Activated naive CD4-positive, alpha-beta T cell treated with anti-CD3 and anti-CD28 coated beads for 36 hours (primary cell): ENCODE measurements at regions of chr2 and their contacts with region 1.

Region 1: DNA sequence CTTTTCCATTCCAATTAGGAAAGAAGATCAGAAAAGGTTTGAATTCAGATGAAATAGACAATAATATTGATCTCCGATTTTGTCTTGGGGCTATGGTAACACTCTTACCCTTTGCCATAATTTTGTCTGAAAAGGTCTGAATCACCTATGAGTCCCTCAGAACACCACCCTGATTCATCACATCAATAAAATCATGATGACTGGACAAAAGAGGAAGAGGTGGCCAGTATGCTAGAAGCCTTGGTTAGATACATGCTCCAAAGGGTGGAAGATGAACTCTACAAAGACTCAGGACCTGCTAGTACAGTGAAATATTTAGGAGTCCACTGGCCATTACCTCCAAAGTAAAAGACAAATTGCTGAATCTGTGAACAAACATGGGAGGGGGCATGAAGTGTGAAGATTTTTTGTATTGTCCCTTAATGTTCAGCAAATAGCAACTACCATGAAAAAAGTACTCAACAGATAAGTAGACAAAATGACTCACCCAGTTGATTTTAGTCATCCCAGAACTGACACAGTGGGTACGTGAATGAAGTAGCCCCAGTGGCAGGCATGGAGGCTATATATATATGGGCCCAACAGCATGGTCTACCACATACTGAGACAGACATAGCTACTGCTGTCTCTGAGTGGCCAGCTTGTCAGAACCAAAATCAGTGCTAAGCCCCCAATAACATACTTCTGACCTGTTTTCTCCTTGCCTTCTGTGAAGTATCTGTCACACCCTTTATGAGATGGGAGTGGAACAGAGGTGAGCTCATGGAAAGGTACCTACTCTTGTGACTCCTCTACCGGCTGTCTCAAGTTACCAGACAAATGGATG is 36.5 kb upstream of the GLS start:
- DNase-seq: peak; percentile 76
- H3K4me3 Mint-ChIP-seq: peak overlapping the region; percentile 22
- H3K27ac Mint-ChIP-seq: peak overlapping the region; percentile 85
- H3K4me1 Mint-ChIP-seq: peaks cover 48% of the 10 kb centered on the region
- H3K27me3 Mint-ChIP-seq: no peaks in the 10 kb centered on the region

Region 2: GRCh38 chr2:190408538-190409271 is 435.4 kb before region 1 on chr2:
- CTCF ChIA-PET with region 1: no interaction called
- intact Hi-C with region 1: loop called (anchors 2 kb)
- DNase-seq: peak; percentile 71
- H3K4me3 Mint-ChIP-seq: peak overlapping the region; percentile 84
- H3K27ac Mint-ChIP-seq: peak overlapping the region; percentile 90
- H3K4me1 Mint-ChIP-seq: peaks cover 46% of the 10 kb centered on the region
- H3K27me3 Mint-ChIP-seq: no peaks in the 10 kb centered on the region

Region 3: GRCh38 chr2:190679813-190680591 is 164.1 kb before region 1 on chr2:
- CTCF ChIA-PET with region 1: no interaction called
- intact Hi-C with region 1: loop called (anchors 1 kb)
- DNase-seq: peak; percentile 75
- H3K4me3 Mint-ChIP-seq: peak overlapping the region; percentile 13
- H3K27ac Mint-ChIP-seq: peak overlapping the region; percentile 81
- H3K4me1 Mint-ChIP-seq: peaks cover 52% of the 10 kb centered on the region
- H3K27me3 Mint-ChIP-seq: no peaks in the 10 kb centered on the region

Region 4: DNA sequence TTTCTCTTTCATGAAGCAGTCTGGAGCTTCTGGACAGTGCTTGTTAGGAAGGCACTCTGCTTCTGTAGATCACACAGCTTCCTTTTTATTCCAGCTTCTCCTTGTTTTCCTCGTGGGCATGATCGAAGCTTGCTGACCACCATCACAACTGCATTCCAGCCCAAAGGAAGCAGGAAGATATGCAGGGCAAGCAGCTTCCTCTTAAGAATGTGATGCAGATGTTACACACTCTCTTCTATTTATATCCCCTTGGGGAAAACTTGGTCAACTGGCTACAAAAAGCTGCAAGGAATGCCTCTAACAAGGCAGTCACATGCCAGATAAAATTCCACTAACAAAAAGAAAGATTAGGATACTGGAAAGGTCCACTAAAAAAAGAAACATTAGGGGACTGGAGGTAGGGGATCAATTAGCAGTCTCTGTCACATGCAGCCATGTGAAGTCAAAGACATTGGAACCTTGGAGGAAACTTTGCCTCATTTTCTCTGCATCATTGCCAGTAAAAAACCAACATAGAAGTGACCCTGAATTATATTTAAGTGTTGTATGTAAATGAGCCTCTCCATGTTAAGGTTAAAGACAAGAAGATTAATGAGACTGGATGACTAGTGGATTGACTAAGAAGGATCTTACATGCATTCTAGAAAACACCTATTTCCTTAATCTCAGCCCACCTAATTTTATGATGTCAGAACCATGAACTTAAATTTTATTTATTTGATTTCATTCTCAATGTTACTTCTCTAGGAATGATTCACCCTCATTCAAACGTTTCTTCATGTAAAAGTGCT is 96.9 kb before region 1 on chr2:
- CTCF ChIA-PET with region 1: no interaction called
- intact Hi-C with region 1: no loop called
- DNase-seq: no peak
- H3K4me3 Mint-ChIP-seq: no peak overlapping the region
- H3K27ac Mint-ChIP-seq: no peak overlapping the region
- H3K4me1 Mint-ChIP-seq: peaks cover 36% of the 10 kb centered on the region
- H3K27me3 Mint-ChIP-seq: no peaks in the 10 kb centered on the region

Region 5: GRCh38 chr2:190791347-190791975 is 52.6 kb before region 1 on chr2:
- CTCF ChIA-PET with region 1: no interaction called
- intact Hi-C with region 1: loop called (anchors 1 kb)
- DNase-seq: peak; percentile 67
- H3K4me3 Mint-ChIP-seq: no peak overlapping the region
- H3K27ac Mint-ChIP-seq: peak overlapping the region; percentile 83
- H3K4me1 Mint-ChIP-seq: peaks cover 55% of the 10 kb centered on the region
- H3K27me3 Mint-ChIP-seq: no peaks in the 10 kb centered on the region

Region 6: GRCh38 chr2:190911813-190912212 is 67.7 kb after region 1 on chr2:
- CTCF ChIA-PET with region 1: no interaction called
- intact Hi-C with region 1: loop called (anchors 1 kb)
- DNase-seq: no peak
- H3K4me3 Mint-ChIP-seq: no peak overlapping the region
- H3K27ac Mint-ChIP-seq: peak overlapping the region; percentile 51
- H3K4me1 Mint-ChIP-seq: peaks cover 48% of the 10 kb centered on the region
- H3K27me3 Mint-ChIP-seq: no peaks in the 10 kb centered on the region

Region 7: GRCh38 chr2:191020221-191020741 is 176.2 kb after region 1 on chr2:
- CTCF ChIA-PET with region 1: no interaction called
- intact Hi-C with region 1: loop called (anchors 1 kb)
- DNase-seq: peak; percentile 93
- H3K4me3 Mint-ChIP-seq: no peak overlapping the region
- H3K27ac Mint-ChIP-seq: no peak overlapping the region
- H3K4me1 Mint-ChIP-seq: peaks cover 36% of the 10 kb centered on the region
- H3K27me3 Mint-ChIP-seq: no peaks in the 10 kb centered on the region

Region 8: GRCh38 chr2:191677646-191678436 is 833.8 kb after region 1 on chr2 and contains the start of gene NABP1:
- CTCF ChIA-PET with region 1: no interaction called
- intact Hi-C with region 1: loop called (anchors 5 kb)
- DNase-seq: peak; percentile 99
- H3K4me3 Mint-ChIP-seq: peak within 1 kb of the TSS; percentile 99
- H3K27ac Mint-ChIP-seq: peak within 1 kb of the TSS; percentile 100
- H3K4me1 Mint-ChIP-seq: peaks cover 37% of the 10 kb centered on the region
- H3K27me3 Mint-ChIP-seq: no peaks in the 10 kb centered on the region
- total RNA-seq, gene NABP1: 97.5 to 101 TPM